ENCODE measurements at regions of chr15 and their contacts with region 1.

Region 1: GRCh38 chr15:66132251-66132816 is 121.2 kb downstream of the MEGF11 start:
- DNase-seq: peak in 2 of 10 donors; percentile 41 to 46
- H3K4me3 ChIP-seq: no peak overlapping the region
- H3K27ac ChIP-seq: peak overlapping the region in 58 of 59 donors; percentile 56 to 99 (median 92)
- H3K27me3 ChIP-seq: peaks cover 0 to 18% (median 0%) of the 10 kb centered on the region in 45 donors
- CTCF ChIP-seq: no peak

Region 2: GRCh38 chr15:66193066-66193465 is 60.7 kb after region 1 on chr15:
- intact Hi-C with region 1: loop called (anchors 2 to 5 kb)
- DNase-seq: no peak
- H3K4me3 ChIP-seq: no peak overlapping the region
- H3K27ac ChIP-seq: no peak overlapping the region
- H3K27me3 ChIP-seq: peaks cover 0 to 7% (median 0%) of the 10 kb centered on the region in 45 donors
- CTCF ChIP-seq: no peak